Aorta (tissue), 5 donors: ENCODE measurements at regions of chr16 and their contacts with region 1.

Region 1: DNA sequence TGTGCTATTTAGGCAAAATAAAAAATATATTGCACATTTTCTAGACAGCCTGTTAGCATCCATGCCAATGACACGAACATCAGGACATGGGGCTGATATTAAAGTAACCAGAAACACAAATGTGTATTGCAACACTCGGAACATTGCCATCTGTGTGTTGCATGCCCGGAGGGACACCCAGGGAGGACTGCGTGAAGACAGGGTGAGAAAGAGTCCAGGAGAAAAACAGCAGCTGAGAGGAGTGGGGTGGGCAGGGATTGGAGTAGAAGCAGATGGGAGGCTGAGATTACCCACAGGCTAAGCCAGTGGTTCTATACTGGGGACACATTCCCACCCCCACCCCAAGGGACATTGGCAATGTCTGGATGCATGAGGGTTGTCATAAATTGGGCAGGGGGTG is 114.8 kb downstream of the GRIN2A start:
- DNase-seq: no peak
- ATAC-seq: no peak
- H3K4me3 ChIP-seq: no peak overlapping the region
- H3K27ac ChIP-seq: no peak overlapping the region
- H3K4me1 ChIP-seq: no peaks in the 10 kb centered on the region
- H3K27me3 ChIP-seq: no peaks in the 10 kb centered on the region

Region 2: GRCh38 chr16:9996221-9996620 is 71.2 kb before region 1 on chr16:
- intact Hi-C with region 1: loop called in 1 of 2 experiments (anchors 2 kb)
- DNase-seq: no peak
- ATAC-seq: no peak
- H3K4me3 ChIP-seq: no peak overlapping the region
- H3K27ac ChIP-seq: no peak overlapping the region
- H3K4me1 ChIP-seq: no peaks in the 10 kb centered on the region
- H3K27me3 ChIP-seq: no peaks in the 10 kb centered on the region